CD4-positive, alpha-beta T cell (primary cell): ENCODE measurements at regions of chr14 and their contacts with region 1.

Region 1: GRCh38 chr14:89892953-89893352 is 61.6 kb downstream of the EFCAB11 start:
- DNase-seq: no peak
- ATAC-seq: no peak
- H3K4me3 ChIP-seq: no peak overlapping the region
- H3K4me3 Mint-ChIP-seq: no peak overlapping the region
- H3K27ac ChIP-seq: no peak overlapping the region
- H3K27ac Mint-ChIP-seq: no peak overlapping the region
- H3K4me1 ChIP-seq: no peaks in the 10 kb centered on the region
- H3K4me1 Mint-ChIP-seq: no peaks in the 10 kb centered on the region
- H3K27me3 ChIP-seq: no peaks in the 10 kb centered on the region
- H3K27me3 Mint-ChIP-seq: no peaks in the 10 kb centered on the region
- CTCF ChIP-seq: no peak

Region 2: DNA sequence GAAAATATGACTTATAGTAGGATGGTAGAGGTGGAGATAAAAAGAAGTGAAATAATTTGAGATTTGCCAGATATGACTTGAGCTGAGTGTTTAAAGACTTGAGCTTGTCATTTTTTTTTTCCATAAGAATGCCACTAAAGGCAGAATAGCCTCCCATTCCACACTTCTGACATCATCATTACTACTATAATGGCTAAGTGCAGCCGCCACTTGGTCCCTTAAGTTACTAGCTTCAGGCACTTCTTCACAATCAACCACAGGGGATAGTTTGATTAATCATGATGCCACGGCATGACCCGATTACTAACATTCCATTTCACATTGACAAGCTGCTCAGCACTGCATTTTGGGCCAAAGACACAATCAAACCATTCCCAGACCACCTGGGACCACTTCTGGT is 66.4 kb before region 1 on chr14:
- CTCF ChIA-PET with region 1: no interaction called
- POLR2A ChIA-PET with region 1: no interaction called
- intact Hi-C with region 1: loop called in 1 of 2 experiments (anchors 2 kb)
- DNase-seq: no peak
- ATAC-seq: no peak
- H3K4me3 ChIP-seq: no peak overlapping the region
- H3K4me3 Mint-ChIP-seq: no peak overlapping the region
- H3K27ac ChIP-seq: no peak overlapping the region
- H3K27ac Mint-ChIP-seq: no peak overlapping the region
- H3K4me1 ChIP-seq: no peaks in the 10 kb centered on the region
- H3K4me1 Mint-ChIP-seq: no peaks in the 10 kb centered on the region
- H3K27me3 ChIP-seq: no peaks in the 10 kb centered on the region
- H3K27me3 Mint-ChIP-seq: no peaks in the 10 kb centered on the region
- CTCF ChIP-seq: no peak

Region 3: DNA sequence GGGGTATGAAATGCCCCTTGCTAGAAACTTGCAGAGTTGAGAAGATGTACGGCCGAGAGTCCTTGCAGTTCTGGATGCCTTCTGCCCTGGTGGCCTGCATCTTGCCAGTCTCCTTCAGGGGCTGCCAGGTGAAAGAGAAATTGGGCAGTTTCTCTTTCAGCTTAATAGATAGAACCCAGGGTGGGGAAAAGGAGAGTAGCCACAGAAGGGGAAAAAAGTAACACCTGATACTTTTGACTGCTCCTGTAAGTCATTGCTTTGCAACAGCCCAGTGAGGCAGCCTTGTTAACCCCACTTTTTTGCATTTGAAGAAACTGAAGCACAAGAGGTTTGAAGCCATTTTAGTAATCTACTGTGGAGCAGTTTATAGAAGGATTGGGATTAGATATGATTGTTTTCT is 90.4 kb after region 1 on chr14:
- CTCF ChIA-PET with region 1: no interaction called
- POLR2A ChIA-PET with region 1: no interaction called
- intact Hi-C with region 1: no loop called
- DNase-seq: no peak
- ATAC-seq: no peak
- H3K4me3 ChIP-seq: no peak overlapping the region
- H3K4me3 Mint-ChIP-seq: no peak overlapping the region
- H3K27ac ChIP-seq: no peak overlapping the region
- H3K27ac Mint-ChIP-seq: no peak overlapping the region
- H3K4me1 ChIP-seq: no peaks in the 10 kb centered on the region
- H3K4me1 Mint-ChIP-seq: no peaks in the 10 kb centered on the region
- H3K27me3 ChIP-seq: no peaks in the 10 kb centered on the region
- H3K27me3 Mint-ChIP-seq: no peaks in the 10 kb centered on the region
- CTCF ChIP-seq: no peak